ENCODE measurements at regions of chr5 and their contacts with region 1.

Region 1: DNA sequence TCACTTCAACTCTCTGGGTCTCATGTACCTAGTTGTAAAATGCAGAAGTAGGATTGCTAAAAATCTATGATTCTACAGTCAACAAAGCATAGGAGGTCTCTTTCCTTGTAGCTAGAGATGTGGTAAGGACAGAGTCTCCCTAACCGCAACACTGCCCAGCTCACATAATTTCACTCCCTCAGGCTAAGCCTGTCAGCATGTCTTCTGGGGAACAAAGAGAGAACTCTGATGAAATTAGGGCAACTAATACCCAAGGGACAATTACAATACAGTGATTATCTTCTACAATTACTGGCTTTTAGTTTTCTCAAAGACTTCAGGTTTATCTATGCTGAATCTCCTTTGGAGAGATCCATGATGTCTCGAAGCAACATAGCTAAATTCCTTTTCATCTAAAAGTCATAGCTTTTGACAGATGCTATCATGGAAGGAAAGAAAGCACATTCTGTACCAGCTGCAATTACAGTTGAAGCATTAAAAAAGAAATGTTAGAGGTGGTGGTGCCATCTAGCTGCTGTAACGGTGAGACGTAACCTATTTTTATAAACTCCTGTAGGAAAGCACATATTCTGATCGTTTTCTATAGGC is 141.1 kb upstream of the TARS1 start:
- DNase-seq: peak; percentile 79
- H3K4me3 ChIP-seq: no peak overlapping the region
- H3K27ac ChIP-seq: no peak overlapping the region
- H3K4me1 ChIP-seq: no peaks in the 10 kb centered on the region
- H3K27me3 ChIP-seq: no peaks in the 10 kb centered on the region
- CTCF ChIP-seq: peak; percentile 24 to 44
- POLR2A ChIP-seq: no peak

Region 2: DNA sequence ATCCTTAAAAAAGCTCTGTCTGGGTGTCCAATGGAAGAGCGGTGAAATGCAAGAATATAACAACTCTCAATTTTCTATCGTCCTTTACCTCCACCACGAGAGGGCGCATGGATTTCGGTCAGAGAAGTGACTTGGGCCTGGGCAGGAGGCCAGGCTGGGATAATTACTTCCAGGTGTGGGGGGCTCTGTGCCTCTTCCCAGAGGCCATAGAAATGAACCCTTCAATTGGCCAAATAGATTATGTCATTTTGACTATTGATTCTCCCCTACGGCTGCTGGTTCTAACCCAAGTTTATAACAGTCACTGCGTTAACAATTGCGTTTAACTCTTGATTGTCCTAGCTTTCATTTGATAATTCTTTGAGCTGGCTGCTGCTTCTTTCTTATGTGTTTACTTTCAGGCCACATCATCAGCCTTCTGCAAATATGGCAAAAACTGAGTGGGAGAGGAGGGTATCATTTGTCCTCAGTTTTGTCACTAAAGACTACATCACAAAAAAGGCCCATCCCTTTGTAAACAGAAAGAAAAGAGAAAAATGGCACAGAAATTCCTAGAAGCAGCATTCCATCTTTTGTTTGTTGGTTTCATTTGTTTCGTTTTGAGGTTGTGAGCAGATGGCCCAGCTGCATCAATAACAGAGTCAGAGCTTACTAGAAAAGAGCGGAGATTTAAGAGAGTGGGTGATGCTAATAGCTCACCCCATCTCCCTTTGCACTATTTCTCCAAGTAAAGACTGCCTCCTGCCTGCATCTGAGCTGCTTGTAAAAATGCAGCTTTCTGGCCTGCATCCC is 809.7 kb before region 1 on chr5:
- CTCF ChIA-PET with region 1: no interaction called
- POLR2A ChIA-PET with region 1: no interaction called
- dilution Hi-C with region 1: no loop called
- intact Hi-C with region 1: loop called (anchors 10 kb)
- DNase-seq: peak; percentile 73
- H3K4me3 ChIP-seq: no peak overlapping the region
- H3K27ac ChIP-seq: no peak overlapping the region
- H3K4me1 ChIP-seq: no peaks in the 10 kb centered on the region
- H3K27me3 ChIP-seq: no peaks in the 10 kb centered on the region
- CTCF ChIP-seq: peak; percentile 65 to 67
- POLR2A ChIP-seq: no peak

Region 3: GRCh38 chr5:32942225-32942989 is 357.3 kb before region 1 on chr5:
- CTCF ChIA-PET with region 1: interaction called, 3 read pairs
- POLR2A ChIA-PET with region 1: no interaction called
- dilution Hi-C with region 1: no loop called
- intact Hi-C with region 1: loop called (anchors 5 kb)
- DNase-seq: peak; percentile 26
- H3K4me3 ChIP-seq: no peak overlapping the region
- H3K27ac ChIP-seq: no peak overlapping the region
- H3K4me1 ChIP-seq: no peaks in the 10 kb centered on the region
- H3K27me3 ChIP-seq: no peaks in the 10 kb centered on the region
- CTCF ChIP-seq: peak; percentile 38 to 40
- POLR2A ChIP-seq: no peak

Region 4: GRCh38 chr5:33049845-33050244 is 249.9 kb before region 1 on chr5:
- CTCF ChIA-PET with region 1: no interaction called
- POLR2A ChIA-PET with region 1: no interaction called
- dilution Hi-C with region 1: no loop called
- intact Hi-C with region 1: no loop called
- DNase-seq: peak; percentile 62
- H3K4me3 ChIP-seq: no peak overlapping the region
- H3K27ac ChIP-seq: peak overlapping the region; percentile 48
- H3K4me1 ChIP-seq: peaks cover 24% of the 10 kb centered on the region
- H3K27me3 ChIP-seq: no peaks in the 10 kb centered on the region
- CTCF ChIP-seq: no peak
- POLR2A ChIP-seq: no peak

Region 5: GRCh38 chr5:33180900-33181299 is 118.8 kb before region 1 on chr5:
- CTCF ChIA-PET with region 1: interaction called, 13 read pairs
- POLR2A ChIA-PET with region 1: no interaction called
- dilution Hi-C with region 1: no loop called
- intact Hi-C with region 1: loop called (anchors 5 kb)
- DNase-seq: peak; percentile 4
- H3K4me3 ChIP-seq: no peak overlapping the region
- H3K27ac ChIP-seq: no peak overlapping the region
- H3K4me1 ChIP-seq: no peaks in the 10 kb centered on the region
- H3K27me3 ChIP-seq: no peaks in the 10 kb centered on the region
- CTCF ChIP-seq: no peak
- POLR2A ChIP-seq: no peak

Region 6: DNA sequence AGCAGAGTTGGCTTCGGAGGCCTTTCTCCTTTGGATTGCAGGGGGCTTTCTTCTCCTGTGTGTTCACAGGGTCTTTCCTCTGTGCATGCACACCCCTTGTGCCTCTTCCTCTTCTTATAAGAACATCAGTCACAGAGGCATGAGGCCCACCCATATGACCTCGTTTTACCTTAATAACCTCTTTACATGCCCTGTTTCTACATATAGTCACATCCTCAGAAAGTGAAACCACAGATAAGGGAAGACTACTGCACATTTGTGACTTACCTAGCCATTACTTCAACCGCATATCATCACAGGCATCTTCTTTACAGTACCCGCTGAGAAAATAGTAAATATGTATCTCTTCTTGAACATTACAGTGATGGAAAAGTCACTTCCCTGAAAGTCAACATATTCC is 63.9 kb before region 1 on chr5:
- CTCF ChIA-PET with region 1: no interaction called
- POLR2A ChIA-PET with region 1: no interaction called
- dilution Hi-C with region 1: no loop called
- intact Hi-C with region 1: no loop called
- DNase-seq: no peak
- H3K4me3 ChIP-seq: no peak overlapping the region
- H3K27ac ChIP-seq: no peak overlapping the region
- H3K4me1 ChIP-seq: peaks cover 6% of the 10 kb centered on the region
- H3K27me3 ChIP-seq: no peaks in the 10 kb centered on the region
- CTCF ChIP-seq: no peak
- POLR2A ChIP-seq: no peak

Region 7: DNA sequence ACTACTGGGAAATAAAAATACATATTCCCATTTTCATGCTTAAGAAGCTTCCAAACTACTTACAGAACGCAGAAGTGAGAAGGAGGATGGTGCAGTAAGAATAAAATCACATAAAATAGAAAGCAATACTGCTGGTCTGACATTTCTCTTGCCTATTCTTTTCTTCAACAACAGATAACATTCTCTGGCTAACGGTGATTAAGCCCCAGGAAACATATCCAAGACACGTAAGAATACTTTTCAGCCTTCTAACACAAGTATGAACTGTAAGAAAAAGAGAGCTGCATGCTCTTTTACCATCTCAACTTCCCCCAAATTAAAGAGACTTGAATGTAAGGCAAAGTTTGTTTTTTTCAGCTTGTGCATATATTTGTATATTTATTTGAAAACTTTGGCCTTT is 15.0 kb before region 1 on chr5:
- CTCF ChIA-PET with region 1: interaction called, 14 read pairs
- POLR2A ChIA-PET with region 1: no interaction called
- dilution Hi-C with region 1: no loop called
- intact Hi-C with region 1: no loop called
- DNase-seq: no peak
- H3K4me3 ChIP-seq: no peak overlapping the region
- H3K27ac ChIP-seq: no peak overlapping the region
- H3K4me1 ChIP-seq: no peaks in the 10 kb centered on the region
- H3K27me3 ChIP-seq: no peaks in the 10 kb centered on the region
- CTCF ChIP-seq: no peak
- POLR2A ChIP-seq: no peak

Region 8: DNA sequence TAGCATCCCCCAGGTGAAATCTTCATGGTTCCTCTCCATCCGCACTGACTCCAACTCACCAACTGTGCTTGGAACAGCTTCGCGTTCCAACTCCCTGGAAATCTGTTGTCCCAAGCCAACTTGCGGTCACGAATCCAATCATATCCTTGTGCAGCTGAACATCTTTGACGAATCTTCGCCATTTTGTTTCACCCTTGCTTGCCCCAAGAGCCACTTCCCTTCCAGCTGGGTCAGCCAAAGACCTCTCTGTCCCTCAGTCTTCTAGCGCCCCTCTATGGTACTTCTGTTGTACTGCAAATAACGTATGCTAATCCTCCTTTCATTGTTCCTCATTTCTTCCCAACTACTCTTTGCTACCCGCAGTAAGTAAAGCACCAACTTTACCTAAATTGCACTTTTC is 80.0 kb after region 1 on chr5:
- CTCF ChIA-PET with region 1: interaction called, 10 read pairs
- POLR2A ChIA-PET with region 1: no interaction called
- dilution Hi-C with region 1: no loop called
- intact Hi-C with region 1: loop called (anchors 1 kb)
- DNase-seq: peak; percentile 56
- H3K4me3 ChIP-seq: no peak overlapping the region
- H3K27ac ChIP-seq: no peak overlapping the region
- H3K4me1 ChIP-seq: no peaks in the 10 kb centered on the region
- H3K27me3 ChIP-seq: peaks cover 2 to 4% of the 10 kb centered on the region in 2 experiments
- CTCF ChIP-seq: peak; percentile 66 to 69
- POLR2A ChIP-seq: no peak

Region 9: DNA sequence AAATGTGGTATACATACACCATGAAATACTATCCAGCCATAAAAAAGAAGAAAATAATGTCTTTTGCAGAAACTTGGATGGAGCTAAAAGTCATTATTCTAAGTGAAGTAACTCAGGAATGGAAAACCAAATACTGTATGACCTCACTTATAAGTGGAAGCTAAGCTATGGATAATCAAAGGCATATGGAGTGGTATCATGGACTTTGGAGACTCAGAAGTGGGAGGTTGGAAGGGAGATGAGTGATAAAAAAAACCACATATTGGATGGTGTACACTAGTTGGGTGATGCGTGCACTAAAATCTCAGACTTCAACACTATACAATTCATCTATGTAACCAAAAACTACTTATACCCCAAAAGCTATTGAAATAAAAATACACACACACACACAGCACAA is 567.5 kb after region 1 on chr5:
- CTCF ChIA-PET with region 1: no interaction called
- POLR2A ChIA-PET with region 1: no interaction called
- dilution Hi-C with region 1: no loop called
- intact Hi-C with region 1: no loop called
- DNase-seq: no peak
- H3K4me3 ChIP-seq: no peak overlapping the region
- H3K27ac ChIP-seq: no peak overlapping the region
- H3K4me1 ChIP-seq: no peaks in the 10 kb centered on the region
- H3K27me3 ChIP-seq: no peaks in the 10 kb centered on the region
- CTCF ChIP-seq: no peak
- POLR2A ChIP-seq: no peak

Measured in endothelial cell of umbilical vein (primary cell).